Activated CD8-positive, alpha-beta T cell treated with anti-CD3 and anti-CD28 coated beads, Interleukin-2, amount 10 ng/mL, durations not matched to agents 7 days and 5 days (primary cell): ENCODE measurements at regions of chr3 and their contacts with region 1.

Region 1: GRCh38 chr3:142828703-142829305 is 60.1 kb downstream of the PCOLCE2 start:
- DNase-seq: peak; percentile 77
- ATAC-seq: peak; percentile 98
- H3K4me3 Mint-ChIP-seq: no peak overlapping the region
- H3K27ac Mint-ChIP-seq: no peak overlapping the region
- H3K4me1 Mint-ChIP-seq: no peaks in the 10 kb centered on the region
- H3K27me3 Mint-ChIP-seq: peaks cover 24% of the 10 kb centered on the region

Region 2: GRCh38 chr3:142817897-142818296 is 10.9 kb before region 1 on chr3:
- CTCF ChIA-PET with region 1: interaction called, 24 read pairs
- POLR2A ChIA-PET with region 1: no interaction called
- DNase-seq: no peak
- ATAC-seq: no peak
- H3K4me3 Mint-ChIP-seq: no peak overlapping the region
- H3K27ac Mint-ChIP-seq: no peak overlapping the region
- H3K4me1 Mint-ChIP-seq: no peaks in the 10 kb centered on the region
- H3K27me3 Mint-ChIP-seq: peaks cover 14% of the 10 kb centered on the region

Region 3: DNA sequence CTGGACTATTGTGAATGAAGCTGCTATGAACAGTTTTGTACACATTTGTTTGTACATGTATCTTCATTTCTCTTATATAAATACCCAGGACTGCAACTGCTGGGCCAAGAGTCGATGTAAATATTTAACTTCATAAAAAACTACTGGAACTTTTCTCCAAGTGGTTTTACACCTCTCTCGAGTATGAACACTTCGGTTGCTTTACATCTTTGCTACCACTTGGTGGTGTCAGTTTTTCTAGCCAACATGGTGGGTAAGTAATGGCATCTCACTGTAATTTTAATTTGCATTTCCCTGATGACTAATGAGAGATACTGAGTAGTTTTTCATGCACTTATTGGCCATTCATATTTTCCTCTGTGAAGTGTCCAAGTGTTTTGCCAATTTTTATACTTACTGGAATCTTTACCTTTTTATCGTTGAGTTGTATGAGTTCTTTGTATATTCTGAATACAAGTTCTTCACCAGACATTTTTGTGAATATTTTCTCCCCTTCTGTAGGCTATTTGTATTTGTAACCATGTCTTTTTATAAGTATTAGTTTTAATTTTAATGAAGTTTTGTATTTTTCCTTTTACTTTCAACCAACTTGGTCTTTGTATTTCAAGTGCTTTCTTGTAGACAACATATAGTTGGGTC is 15.7 kb after region 1 on chr3:
- CTCF ChIA-PET with region 1: interaction called, 19 read pairs
- POLR2A ChIA-PET with region 1: no interaction called
- DNase-seq: peak; percentile 27
- ATAC-seq: no peak
- H3K4me3 Mint-ChIP-seq: no peak overlapping the region
- H3K27ac Mint-ChIP-seq: no peak overlapping the region
- H3K4me1 Mint-ChIP-seq: no peaks in the 10 kb centered on the region
- H3K27me3 Mint-ChIP-seq: peaks cover 11% of the 10 kb centered on the region

Region 4: DNA sequence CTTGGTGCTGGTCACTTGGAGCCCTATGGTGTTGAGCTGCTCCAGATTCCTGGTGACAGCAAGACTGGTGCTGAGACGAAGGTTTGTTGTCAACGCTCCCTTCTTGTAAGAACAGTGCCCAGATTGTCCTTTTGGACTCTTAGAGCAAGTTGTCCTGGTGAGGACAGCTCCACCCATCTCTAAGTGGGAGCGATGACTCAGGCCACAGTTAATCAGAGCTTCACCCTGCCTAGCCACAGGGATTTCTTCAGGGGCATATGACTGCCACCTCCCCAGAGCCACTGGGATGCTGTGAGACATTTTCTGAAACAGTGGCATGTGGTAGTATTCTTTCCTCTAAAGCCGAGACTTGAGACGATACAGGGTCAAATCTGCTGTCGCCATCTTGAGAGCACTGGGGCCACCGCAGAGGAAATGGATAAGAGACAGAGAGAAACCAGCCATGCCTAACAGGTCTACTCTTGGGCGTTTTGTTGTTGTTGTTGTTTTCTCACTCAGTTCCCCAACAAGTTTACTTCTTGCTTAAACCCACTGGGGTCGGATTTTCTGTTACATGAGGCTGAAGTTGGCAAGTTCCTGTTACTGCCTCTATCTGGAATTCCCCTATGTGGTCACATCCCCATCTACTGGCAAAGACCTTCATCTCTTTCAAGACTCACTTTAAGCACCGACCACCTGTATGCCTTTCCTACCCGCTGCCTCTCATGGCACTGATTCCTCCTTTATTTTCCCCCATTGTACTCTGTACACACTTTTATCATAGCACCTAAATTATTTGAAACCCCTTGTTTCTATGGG is 76.0 kb after region 1 on chr3:
- CTCF ChIA-PET with region 1: interaction called, 10 read pairs
- POLR2A ChIA-PET with region 1: no interaction called
- DNase-seq: no peak
- ATAC-seq: no peak
- H3K4me3 Mint-ChIP-seq: no peak overlapping the region
- H3K27ac Mint-ChIP-seq: no peak overlapping the region
- H3K4me1 Mint-ChIP-seq: peaks cover 4% of the 10 kb centered on the region
- H3K27me3 Mint-ChIP-seq: peaks cover 19% of the 10 kb centered on the region

Region 5: GRCh38 chr3:142931222-142931621 is 102.4 kb after region 1 on chr3:
- CTCF ChIA-PET with region 1: interaction called, 12 read pairs
- POLR2A ChIA-PET with region 1: no interaction called
- DNase-seq: peak; percentile 30
- ATAC-seq: peak; percentile 64
- H3K4me3 Mint-ChIP-seq: no peak overlapping the region
- H3K27ac Mint-ChIP-seq: no peak overlapping the region
- H3K4me1 Mint-ChIP-seq: no peaks in the 10 kb centered on the region
- H3K27me3 Mint-ChIP-seq: peaks cover 8% of the 10 kb centered on the region

Region 6: GRCh38 chr3:142987080-142987700 is 158.4 kb after region 1 on chr3:
- CTCF ChIA-PET with region 1: interaction called, 18 read pairs
- POLR2A ChIA-PET with region 1: no interaction called
- DNase-seq: no peak
- ATAC-seq: peak; percentile 39
- H3K4me3 Mint-ChIP-seq: no peak overlapping the region
- H3K27ac Mint-ChIP-seq: no peak overlapping the region
- H3K4me1 Mint-ChIP-seq: no peaks in the 10 kb centered on the region
- H3K27me3 Mint-ChIP-seq: peaks cover 18% of the 10 kb centered on the region

Region 7: DNA sequence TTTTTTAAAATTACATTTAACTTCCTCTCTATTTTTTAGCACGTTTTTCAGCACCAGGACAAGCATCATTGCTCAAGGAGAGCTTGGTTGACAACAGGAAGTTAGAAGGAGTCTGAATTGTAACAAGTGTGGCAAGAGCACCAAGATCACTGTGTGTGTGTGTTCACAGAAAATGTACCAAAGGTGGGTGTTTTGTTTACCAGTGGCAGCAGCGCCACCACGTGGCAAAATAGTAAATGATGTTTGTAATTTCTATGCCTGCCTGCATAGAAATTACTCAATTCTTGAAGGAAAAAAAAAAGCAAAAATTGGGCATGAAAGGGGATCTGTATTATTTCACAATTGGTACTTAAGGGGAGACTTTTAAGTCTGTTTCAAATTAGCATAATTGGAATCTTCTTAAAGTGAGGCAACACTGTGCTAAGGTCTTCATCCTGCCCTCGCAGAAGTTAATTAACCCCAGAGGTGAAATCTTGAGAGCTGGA is 165.2 kb after region 1 on chr3:
- CTCF ChIA-PET with region 1: interaction called, 45 read pairs
- POLR2A ChIA-PET with region 1: no interaction called
- DNase-seq: peak; percentile 75
- ATAC-seq: peak; percentile 72
- H3K4me3 Mint-ChIP-seq: no peak overlapping the region
- H3K27ac Mint-ChIP-seq: no peak overlapping the region
- H3K4me1 Mint-ChIP-seq: no peaks in the 10 kb centered on the region
- H3K27me3 Mint-ChIP-seq: peaks cover 7% of the 10 kb centered on the region